ENCODE measurements at regions of chrX and their contacts with region 1.

Region 1: DNA sequence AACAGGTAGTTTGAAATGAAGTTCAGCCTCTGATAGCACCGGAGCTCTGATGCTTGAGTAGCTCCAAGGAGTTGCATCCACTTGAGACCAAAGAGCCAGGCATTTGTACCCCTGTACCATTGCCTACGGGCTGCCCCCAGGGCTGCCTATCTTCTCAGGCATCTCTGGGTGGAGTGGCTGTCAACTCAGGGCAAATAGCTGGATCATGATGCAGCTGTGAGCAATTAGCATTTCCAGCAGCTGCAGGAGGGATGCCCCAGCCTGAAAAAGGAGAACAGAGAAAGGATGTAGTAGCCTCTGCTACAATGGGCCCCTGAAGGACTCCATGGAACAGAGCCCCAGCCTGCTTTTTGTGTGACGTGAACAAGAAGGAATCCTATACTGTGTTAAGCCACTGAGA is 492.6 kb downstream of the BCOR start:
- DNase-seq: no peak
- H3K4me3 ChIP-seq: no peak overlapping the region
- H3K27ac ChIP-seq: no peak overlapping the region
- H3K4me1 ChIP-seq: no peaks in the 10 kb centered on the region
- H3K27me3 ChIP-seq: no peaks in the 10 kb centered on the region
- CTCF ChIP-seq: no peak
- EP300 ChIP-seq: no peak
- POLR2A ChIP-seq: no peak

Region 2: GRCh38 chrX:40897718-40898270 is 1292.6 kb after region 1 on chrX:
- in situ Hi-C with region 1: no loop called
- intact Hi-C with region 1: loop called (anchors 10 kb)
- DNase-seq: no peak
- H3K4me3 ChIP-seq: no peak overlapping the region
- H3K27ac ChIP-seq: no peak overlapping the region
- H3K4me1 ChIP-seq: no peaks in the 10 kb centered on the region
- H3K27me3 ChIP-seq: no peaks in the 10 kb centered on the region
- CTCF ChIP-seq: no peak
- EP300 ChIP-seq: no peak
- POLR2A ChIP-seq: no peak

Measured in transverse colon (tissue), 4 donors.